Breast epithelium (tissue), 4 donors: ENCODE measurements at regions of chr9 and their contacts with region 1.

Region 1: DNA sequence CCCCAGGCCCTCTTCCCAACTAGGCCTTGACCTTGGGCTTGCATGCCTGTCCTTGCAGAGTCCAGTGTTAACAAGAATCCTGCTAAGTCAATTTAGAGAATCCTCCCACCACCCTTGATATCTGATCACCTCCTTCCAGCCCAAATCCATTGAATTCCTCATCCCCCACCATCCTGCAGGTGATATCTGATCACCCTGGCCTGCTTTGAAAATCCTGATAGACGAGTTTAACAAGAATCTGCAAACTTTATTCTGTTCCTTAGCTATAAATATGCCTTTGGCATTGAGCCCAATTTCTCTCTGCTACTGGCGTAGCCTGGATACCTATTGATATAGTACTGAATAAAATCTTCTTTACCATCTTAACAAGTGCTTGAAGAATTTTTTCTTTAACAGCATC is 125.5 kb downstream of the DIRAS2 start:
- DNase-seq: no peak
- H3K4me3 ChIP-seq: no peak overlapping the region
- H3K27ac ChIP-seq: no peak overlapping the region
- H3K4me1 ChIP-seq: no peaks in the 10 kb centered on the region
- H3K27me3 ChIP-seq: no peaks in the 10 kb centered on the region
- CTCF ChIP-seq: no peak
- POLR2A ChIP-seq: no peak

Region 2: GRCh38 chr9:90487652-90488051 is 29.5 kb before region 1 on chr9:
- intact Hi-C with region 1: loop called (anchors 2 kb)
- DNase-seq: no peak
- H3K4me3 ChIP-seq: no peak overlapping the region
- H3K27ac ChIP-seq: no peak overlapping the region
- H3K4me1 ChIP-seq: no peaks in the 10 kb centered on the region
- H3K27me3 ChIP-seq: no peaks in the 10 kb centered on the region
- CTCF ChIP-seq: no peak
- POLR2A ChIP-seq: no peak